Left lung (tissue), 14 donors: ENCODE measurements at regions of chr16 and their contacts with region 1.

Region 1: DNA sequence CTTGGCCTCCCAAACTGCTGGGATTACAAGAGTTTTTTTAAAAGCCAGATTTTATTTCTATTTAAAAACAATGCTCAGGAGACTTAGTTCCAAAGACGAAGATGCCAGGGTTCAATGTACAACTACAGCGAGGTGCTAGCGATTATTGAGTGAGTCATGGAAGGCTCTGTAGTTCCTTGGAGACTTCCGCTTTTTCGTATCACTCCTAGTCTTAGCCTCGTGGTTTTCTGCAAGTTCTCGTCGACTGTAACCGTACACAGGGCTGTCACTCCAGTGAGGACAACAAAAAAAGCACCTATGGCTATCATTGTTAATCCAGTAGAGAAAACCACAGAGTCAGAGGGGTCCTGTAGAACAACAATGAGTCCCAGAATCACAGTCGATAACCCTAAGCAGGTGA is 22.7 kb upstream of the ZC3H7A start:
- DNase-seq: no peak
- ATAC-seq: peak; percentile 30
- H3K4me3 ChIP-seq: no peak overlapping the region
- H3K27ac ChIP-seq: no peak overlapping the region
- H3K4me1 ChIP-seq: peaks cover under 1 to 36% of the 10 kb centered on the region in 2 donors
- H3K27me3 ChIP-seq: no peaks in the 10 kb centered on the region
- CTCF ChIP-seq: no peak

Region 2: GRCh38 chr16:11396241-11397048 is 423.4 kb before region 1 on chr16:
- intact Hi-C with region 1: loop called in 1 of 2 experiments (anchors 10 kb)
- DNase-seq: peak in 3 of 4 donors; percentile 62 to 92 (median 73)
- ATAC-seq: peak; percentile 77
- H3K4me3 ChIP-seq: no peak overlapping the region
- H3K27ac ChIP-seq: no peak overlapping the region
- H3K4me1 ChIP-seq: peaks cover 5 to 6% of the 10 kb centered on the region in 2 donors
- H3K27me3 ChIP-seq: peaks cover 0 to 4% of the 10 kb centered on the region in 2 donors
- CTCF ChIP-seq: peak; percentile 97 to 99

Region 3: GRCh38 chr16:12729448-12729847 is 909.6 kb after region 1 on chr16:
- intact Hi-C with region 1: no loop called
- DNase-seq: no peak
- ATAC-seq: no peak
- H3K4me3 ChIP-seq: no peak overlapping the region
- H3K27ac ChIP-seq: no peak overlapping the region
- H3K4me1 ChIP-seq: no peaks in the 10 kb centered on the region
- H3K27me3 ChIP-seq: no peaks in the 10 kb centered on the region
- CTCF ChIP-seq: no peak